ENCODE measurements at regions of chr17 and their contacts with region 1.

Region 1: DNA sequence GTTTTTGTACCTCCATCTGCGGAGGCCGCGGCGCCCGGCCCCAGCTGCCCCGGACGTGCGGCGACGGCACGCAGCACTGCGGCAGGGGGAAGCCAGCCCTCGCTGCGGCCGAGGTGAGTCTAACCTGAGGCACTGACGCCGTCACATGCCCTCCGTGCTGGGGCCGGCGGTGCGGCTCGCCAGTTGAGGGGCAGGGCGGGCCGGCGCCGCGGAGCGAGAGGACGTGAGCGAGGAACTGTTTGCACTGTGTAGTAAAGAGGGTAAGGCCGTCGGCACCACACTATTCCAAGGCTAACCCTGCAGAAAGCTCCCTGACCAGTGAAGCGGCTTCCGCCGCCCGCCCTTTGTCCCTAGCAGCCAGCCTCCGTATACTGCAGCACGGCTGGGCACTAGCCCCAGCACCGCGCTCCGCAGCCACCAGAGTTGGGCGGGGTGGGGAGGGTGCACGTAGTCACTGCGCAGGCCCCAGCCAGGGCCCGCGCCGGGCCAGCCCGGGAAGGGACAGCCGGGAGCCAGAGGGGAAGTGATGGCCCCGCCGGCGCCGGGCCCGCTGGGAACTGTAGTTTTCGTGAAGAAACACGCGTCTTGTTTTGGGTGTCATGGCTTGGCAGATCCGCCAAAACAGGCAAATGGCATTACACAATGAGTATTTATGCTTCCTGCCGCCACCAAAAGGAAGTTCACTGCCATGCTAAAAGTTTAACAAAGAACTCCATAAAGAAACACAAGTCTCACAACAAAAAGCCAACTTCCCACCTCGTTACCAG is 580 bp upstream of the KANSL1 start:
- DNase-seq: peak; percentile 92
- ATAC-seq: peak; percentile 66
- H3K4me3 ChIP-seq: peak overlapping the region; percentile 79 to 95 (median 83)
- H3K4me3 Mint-ChIP-seq: peak overlapping the region; percentile 78
- H3K27ac ChIP-seq: peak overlapping the region; percentile 91 to 97
- H3K27ac Mint-ChIP-seq: peak overlapping the region; percentile 86
- H3K4me1 ChIP-seq: peaks cover 29 to 37% of the 10 kb centered on the region in 2 donors
- H3K4me1 Mint-ChIP-seq: peaks cover 47% of the 10 kb centered on the region
- H3K27me3 ChIP-seq: no peaks in the 10 kb centered on the region
- H3K27me3 Mint-ChIP-seq: no peaks in the 10 kb centered on the region
- CTCF ChIP-seq: no peak

Region 2: DNA sequence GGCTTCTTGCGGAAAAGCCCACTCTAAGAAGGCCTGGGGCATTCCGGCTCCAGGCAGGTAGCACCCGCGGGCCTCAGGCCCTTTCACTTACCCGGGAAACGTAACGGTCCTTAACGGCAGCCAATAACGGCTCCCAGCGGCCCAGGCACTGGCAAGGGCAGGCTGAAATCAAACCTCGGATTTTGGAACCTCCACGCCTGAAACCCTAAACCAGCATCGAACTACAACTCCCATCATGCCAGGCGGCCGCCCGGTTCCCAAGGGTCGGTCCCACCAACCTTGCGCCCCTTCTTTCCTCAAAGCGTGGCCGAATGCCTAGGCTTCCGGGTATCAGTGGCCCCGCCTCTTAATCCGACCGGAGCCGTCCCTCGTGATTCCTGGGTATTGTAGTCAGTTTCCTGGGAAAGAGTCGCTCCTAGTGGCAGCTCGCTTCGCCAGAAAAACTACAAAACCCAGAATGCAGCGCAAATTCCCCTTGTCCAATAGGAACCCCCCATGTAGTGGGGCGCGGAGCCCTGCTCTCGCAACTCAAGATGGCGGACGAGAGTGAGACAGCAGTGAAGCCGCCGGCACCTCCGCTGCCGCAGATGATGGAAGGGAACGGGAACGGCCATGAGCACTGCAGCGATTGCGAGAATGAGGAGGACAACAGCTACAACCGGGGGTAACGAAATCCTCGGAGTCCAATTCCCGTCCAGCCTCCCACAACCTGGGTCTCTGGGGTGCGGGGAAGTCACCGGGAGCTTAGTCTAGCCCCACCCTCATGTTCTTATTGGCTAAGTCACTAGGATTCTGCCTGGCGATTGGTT is 1132.8 kb before region 1 on chr17 and contains the start of gene NMT1:
- CTCF ChIA-PET with region 1: no interaction called
- POLR2A ChIA-PET with region 1: no interaction called
- intact Hi-C with region 1: loop called (anchors 10 kb)
- DNase-seq: peak; percentile 100
- ATAC-seq: peak; percentile 87
- H3K4me3 ChIP-seq: peak within 1 kb of the TSS; percentile 62 to 98 (median 96)
- H3K4me3 Mint-ChIP-seq: peak within 1 kb of the TSS; percentile 99
- H3K27ac ChIP-seq: peak within 1 kb of the TSS; percentile 75 to 89
- H3K27ac Mint-ChIP-seq: peak within 1 kb of the TSS; percentile 100
- H3K4me1 ChIP-seq: peaks cover 29 to 42% of the 10 kb centered on the region in 2 donors
- H3K4me1 Mint-ChIP-seq: peaks cover 40% of the 10 kb centered on the region
- H3K27me3 ChIP-seq: no peaks in the 10 kb centered on the region
- H3K27me3 Mint-ChIP-seq: no peaks in the 10 kb centered on the region
- CTCF ChIP-seq: no peak
- total RNA-seq, gene NMT1: 123 and 134 TPM in 2 replicates

Region 3: DNA sequence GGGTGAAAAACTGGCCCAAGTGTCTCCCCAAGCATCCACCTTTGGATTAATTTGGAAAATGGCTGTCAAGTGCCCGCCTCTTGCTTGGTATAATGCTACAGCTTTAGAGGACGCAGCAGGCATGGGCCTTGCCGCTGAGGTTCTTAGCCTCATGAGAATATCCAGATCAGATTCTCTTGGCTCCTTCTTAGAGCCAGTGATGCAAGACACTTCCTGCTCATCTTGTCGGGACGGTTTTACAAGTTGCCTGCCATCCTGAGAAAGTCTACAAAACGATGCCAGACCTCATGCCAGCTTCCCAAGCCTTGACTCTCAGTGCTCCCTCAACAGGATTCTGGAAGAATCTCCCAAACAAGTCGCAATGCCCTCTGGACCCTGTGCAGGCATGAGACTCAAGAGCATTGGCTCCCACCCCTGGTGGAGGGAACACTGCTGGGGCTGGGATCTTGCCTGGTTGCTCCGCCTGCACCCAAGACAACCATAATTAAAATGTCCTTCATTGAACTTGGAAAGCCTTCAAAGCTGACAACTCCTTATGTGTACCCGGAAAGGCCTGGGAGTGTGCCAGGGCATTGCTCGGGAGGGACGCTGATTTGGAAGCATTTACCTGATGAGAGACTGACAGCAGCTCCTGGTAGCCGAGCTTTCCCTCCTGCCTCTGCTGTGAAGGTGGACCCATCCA is 220.6 kb before region 1 on chr17:
- CTCF ChIA-PET with region 1: no interaction called
- POLR2A ChIA-PET with region 1: no interaction called
- intact Hi-C with region 1: no loop called
- DNase-seq: no peak
- ATAC-seq: no peak
- H3K4me3 ChIP-seq: no peak overlapping the region
- H3K4me3 Mint-ChIP-seq: no peak overlapping the region
- H3K27ac ChIP-seq: no peak overlapping the region
- H3K27ac Mint-ChIP-seq: no peak overlapping the region
- H3K4me1 ChIP-seq: peaks cover 21 to 31% of the 10 kb centered on the region in 2 donors
- H3K4me1 Mint-ChIP-seq: peaks cover 30% of the 10 kb centered on the region
- H3K27me3 ChIP-seq: no peaks in the 10 kb centered on the region
- H3K27me3 Mint-ChIP-seq: peaks cover 17% of the 10 kb centered on the region
- CTCF ChIP-seq: no peak

Region 4: GRCh38 chr17:46139432-46140210 is 54.2 kb before region 1 on chr17:
- CTCF ChIA-PET with region 1: interaction called, 3 read pairs
- POLR2A ChIA-PET with region 1: interaction called, 5 read pairs
- intact Hi-C with region 1: loop called (anchors 5 kb)
- DNase-seq: no peak
- ATAC-seq: peak; percentile 35
- H3K4me3 ChIP-seq: no peak overlapping the region
- H3K4me3 Mint-ChIP-seq: peak overlapping the region; percentile 57
- H3K27ac ChIP-seq: peak overlapping the region in 1 of 2 donors; percentile 45
- H3K27ac Mint-ChIP-seq: peak overlapping the region; percentile 15
- H3K4me1 ChIP-seq: peaks cover 48 to 73% of the 10 kb centered on the region in 2 donors
- H3K4me1 Mint-ChIP-seq: peaks cover 84% of the 10 kb centered on the region
- H3K27me3 ChIP-seq: no peaks in the 10 kb centered on the region
- H3K27me3 Mint-ChIP-seq: no peaks in the 10 kb centered on the region
- CTCF ChIP-seq: no peak

Region 5: GRCh38 chr17:46179375-46179999 is 14.3 kb before region 1 on chr17:
- CTCF ChIA-PET with region 1: interaction called, 17 read pairs
- POLR2A ChIA-PET with region 1: interaction called, 6 read pairs
- intact Hi-C with region 1: no loop called
- DNase-seq: peak; percentile 57
- ATAC-seq: peak; percentile 43
- H3K4me3 ChIP-seq: no peak overlapping the region
- H3K4me3 Mint-ChIP-seq: peak overlapping the region; percentile 61
- H3K27ac ChIP-seq: peak overlapping the region in 1 of 2 donors; percentile 35
- H3K27ac Mint-ChIP-seq: peak overlapping the region; percentile 27
- H3K4me1 ChIP-seq: peaks cover 29 to 39% of the 10 kb centered on the region in 2 donors
- H3K4me1 Mint-ChIP-seq: peaks cover 79% of the 10 kb centered on the region
- H3K27me3 ChIP-seq: no peaks in the 10 kb centered on the region
- H3K27me3 Mint-ChIP-seq: no peaks in the 10 kb centered on the region
- CTCF ChIP-seq: no peak

Region 6: GRCh38 chr17:46212634-46213435 is 19.0 kb after region 1 on chr17:
- CTCF ChIA-PET with region 1: interaction called, 42 read pairs
- POLR2A ChIA-PET with region 1: interaction called, 3 read pairs
- intact Hi-C with region 1: loop called (anchors 1 kb)
- DNase-seq: peak; percentile 79
- ATAC-seq: peak; percentile 51
- H3K4me3 ChIP-seq: no peak overlapping the region
- H3K4me3 Mint-ChIP-seq: no peak overlapping the region
- H3K27ac ChIP-seq: no peak overlapping the region
- H3K27ac Mint-ChIP-seq: no peak overlapping the region
- H3K4me1 ChIP-seq: no peaks in the 10 kb centered on the region
- H3K4me1 Mint-ChIP-seq: peaks cover 5% of the 10 kb centered on the region
- H3K27me3 ChIP-seq: no peaks in the 10 kb centered on the region
- H3K27me3 Mint-ChIP-seq: no peaks in the 10 kb centered on the region
- CTCF ChIP-seq: peak; percentile 91

Region 7: DNA sequence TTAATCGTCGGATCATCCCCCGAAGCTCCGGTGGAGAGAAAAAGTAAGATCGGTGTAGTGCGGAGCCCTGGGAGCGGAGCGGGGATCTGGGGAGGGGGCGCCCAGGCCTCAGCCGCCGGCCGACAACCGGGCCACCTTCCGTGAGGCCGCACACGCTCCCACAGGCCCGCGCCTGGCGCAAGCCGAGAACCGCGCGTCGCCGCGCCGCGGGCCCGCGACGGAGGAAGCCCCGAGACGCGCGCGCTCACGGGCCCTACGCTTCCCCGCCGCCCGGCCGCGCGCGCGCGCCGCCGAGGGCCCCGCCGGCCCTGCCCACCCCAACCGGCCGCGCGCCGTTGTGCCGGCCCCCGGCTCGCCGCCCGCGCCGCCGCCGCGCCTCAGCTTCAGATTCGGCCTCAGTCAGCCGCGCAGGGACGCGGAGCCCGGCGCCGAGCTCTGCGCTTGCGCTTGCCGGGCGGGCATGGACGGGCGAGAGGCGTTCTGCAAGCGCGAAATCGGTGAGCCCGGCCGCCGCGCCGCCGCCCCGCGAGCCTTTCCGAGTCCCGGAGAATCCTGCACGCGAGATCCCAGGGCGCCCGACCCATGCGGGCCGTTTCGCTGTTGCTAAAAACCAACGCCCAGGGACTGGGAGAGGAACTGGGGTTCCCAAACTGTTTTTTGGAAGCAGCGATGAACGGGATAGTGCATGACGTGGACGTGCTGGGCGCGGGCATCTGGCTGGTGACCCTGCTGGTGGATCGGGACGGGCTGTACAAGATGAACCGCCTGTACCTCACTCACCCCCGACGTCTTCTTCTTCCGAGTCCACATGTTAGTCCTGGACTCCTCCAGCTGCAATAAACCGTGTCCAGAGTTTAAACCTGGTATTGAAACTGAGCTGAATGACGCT is 73.1 kb after region 1 on chr17:
- CTCF ChIA-PET with region 1: no interaction called
- POLR2A ChIA-PET with region 1: no interaction called
- intact Hi-C with region 1: loop called (anchors 1 kb)
- DNase-seq: peak; percentile 93
- ATAC-seq: peak; percentile 84
- H3K4me3 ChIP-seq: peak overlapping the region; percentile 44 to 85 (median 81)
- H3K4me3 Mint-ChIP-seq: peak overlapping the region; percentile 91
- H3K27ac ChIP-seq: peak overlapping the region; percentile 63 to 78
- H3K27ac Mint-ChIP-seq: peak overlapping the region; percentile 90
- H3K4me1 ChIP-seq: peaks cover 10 to 17% of the 10 kb centered on the region in 2 donors
- H3K4me1 Mint-ChIP-seq: peaks cover 18% of the 10 kb centered on the region
- H3K27me3 ChIP-seq: no peaks in the 10 kb centered on the region
- H3K27me3 Mint-ChIP-seq: peaks cover 9% of the 10 kb centered on the region
- CTCF ChIP-seq: no peak

Region 8: GRCh38 chr17:47066841-47067682 is 873.3 kb after region 1 on chr17:
- CTCF ChIA-PET with region 1: no interaction called
- POLR2A ChIA-PET with region 1: interaction called, 4 read pairs
- intact Hi-C with region 1: loop called (anchors 10 kb)
- DNase-seq: peak; percentile 91
- ATAC-seq: peak; percentile 99
- H3K4me3 ChIP-seq: peak overlapping the region; percentile 65 to 95 (median 90)
- H3K4me3 Mint-ChIP-seq: peak overlapping the region; percentile 98
- H3K27ac ChIP-seq: peak overlapping the region; percentile 75 to 93
- H3K27ac Mint-ChIP-seq: peak overlapping the region; percentile 97
- H3K4me1 ChIP-seq: peaks cover 11 to 12% of the 10 kb centered on the region in 2 donors
- H3K4me1 Mint-ChIP-seq: peaks cover 36% of the 10 kb centered on the region
- H3K27me3 ChIP-seq: no peaks in the 10 kb centered on the region
- H3K27me3 Mint-ChIP-seq: no peaks in the 10 kb centered on the region
- CTCF ChIP-seq: no peak